ENCODE measurements at regions of chr17 and their contacts with region 1.

Region 1: DNA sequence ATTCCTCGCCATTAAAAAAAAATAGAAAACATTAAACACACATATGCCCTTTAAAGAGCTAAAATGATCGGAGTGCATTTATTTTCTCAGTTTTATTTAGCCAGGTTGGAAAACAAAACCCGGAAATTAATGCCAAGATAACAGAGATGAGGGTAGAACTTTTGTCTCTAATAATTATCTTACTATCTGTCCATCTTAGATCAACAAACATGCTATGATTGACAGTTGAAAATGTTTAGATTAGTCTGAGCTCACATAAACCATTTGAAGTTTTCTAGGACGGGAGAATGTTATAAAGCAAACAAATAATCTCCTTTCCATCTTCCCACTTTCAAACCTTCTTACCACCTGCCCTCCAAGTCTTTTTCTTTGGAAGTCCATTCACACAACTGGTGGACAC is 333.4 kb upstream of the SOX9 start:
- DNase-seq: no peak
- ATAC-seq: no peak
- H3K4me3 ChIP-seq: no peak overlapping the region
- H3K27ac ChIP-seq: no peak overlapping the region
- H3K4me1 ChIP-seq: no peaks in the 10 kb centered on the region
- H3K27me3 ChIP-seq: peaks cover 0 to 9% (median 0%) of the 10 kb centered on the region in 7 donors
- CTCF ChIP-seq: no peak

Region 2: GRCh38 chr17:71830866-71831265 is 43.4 kb after region 1 on chr17:
- intact Hi-C with region 1: loop called in 1 of 10 experiments (anchors 10 kb)
- DNase-seq: no peak
- ATAC-seq: no peak
- H3K4me3 ChIP-seq: no peak overlapping the region
- H3K27ac ChIP-seq: no peak overlapping the region
- H3K4me1 ChIP-seq: peaks cover 0 to 4% (median 0%) of the 10 kb centered on the region in 9 donors
- H3K27me3 ChIP-seq: peaks cover 0 to 31% (median 6%) of the 10 kb centered on the region in 7 donors
- CTCF ChIP-seq: no peak